Activated CD4-positive, alpha-beta memory T cell treated with anti-CD3 and anti-CD28 coated beads for 36 hours (primary cell): ENCODE measurements at regions of chr11 and their contacts with region 1.

Region 1: GRCh38 chr11:12143461-12144258 is 33.3 kb downstream of the MICAL2 start:
- DNase-seq: no peak
- H3K4me3 Mint-ChIP-seq: no peak overlapping the region
- H3K27ac Mint-ChIP-seq: peak overlapping the region; percentile 59
- H3K4me1 Mint-ChIP-seq: peaks cover 69% of the 10 kb centered on the region
- H3K27me3 Mint-ChIP-seq: no peaks in the 10 kb centered on the region

Region 2: GRCh38 chr11:12128301-12128751 is 15.3 kb before region 1 on chr11:
- CTCF ChIA-PET with region 1: interaction called, 3 read pairs
- POLR2A ChIA-PET with region 1: no interaction called
- intact Hi-C with region 1: loop called (anchors 2 kb)
- DNase-seq: no peak
- H3K4me3 Mint-ChIP-seq: no peak overlapping the region
- H3K27ac Mint-ChIP-seq: no peak overlapping the region
- H3K4me1 Mint-ChIP-seq: peaks cover 63% of the 10 kb centered on the region
- H3K27me3 Mint-ChIP-seq: no peaks in the 10 kb centered on the region

Region 3: GRCh38 chr11:12485328-12485727 is 341.7 kb after region 1 on chr11:
- CTCF ChIA-PET with region 1: no interaction called
- POLR2A ChIA-PET with region 1: no interaction called
- intact Hi-C with region 1: no loop called
- DNase-seq: no peak
- H3K4me3 Mint-ChIP-seq: no peak overlapping the region
- H3K27ac Mint-ChIP-seq: no peak overlapping the region
- H3K4me1 Mint-ChIP-seq: no peaks in the 10 kb centered on the region
- H3K27me3 Mint-ChIP-seq: no peaks in the 10 kb centered on the region